OCI-LY7 (cell line): ENCODE measurements at regions of chr4 and their contacts with region 1.

Region 1: GRCh38 chr4:27000820-27001219 is 140.2 kb downstream of the STIM2 start:
- DNase-seq: peak; percentile 70
- H3K4me3 ChIP-seq: no peak overlapping the region
- H3K27ac ChIP-seq: peak overlapping the region; percentile 38
- H3K4me1 ChIP-seq: peaks cover 65% of the 10 kb centered on the region
- CTCF ChIP-seq: peak; percentile 77

Region 2: GRCh38 chr4:26719954-26720552 is 280.8 kb before region 1 on chr4:
- CTCF ChIA-PET with region 1: no interaction called
- POLR2A ChIA-PET with region 1: interaction called, 15 read pairs
- intact Hi-C with region 1: no loop called
- DNase-seq: peak; percentile 49
- H3K4me3 ChIP-seq: no peak overlapping the region
- H3K27ac ChIP-seq: no peak overlapping the region
- H3K4me1 ChIP-seq: peaks cover 36% of the 10 kb centered on the region
- CTCF ChIP-seq: peak; percentile 97

Region 3: DNA sequence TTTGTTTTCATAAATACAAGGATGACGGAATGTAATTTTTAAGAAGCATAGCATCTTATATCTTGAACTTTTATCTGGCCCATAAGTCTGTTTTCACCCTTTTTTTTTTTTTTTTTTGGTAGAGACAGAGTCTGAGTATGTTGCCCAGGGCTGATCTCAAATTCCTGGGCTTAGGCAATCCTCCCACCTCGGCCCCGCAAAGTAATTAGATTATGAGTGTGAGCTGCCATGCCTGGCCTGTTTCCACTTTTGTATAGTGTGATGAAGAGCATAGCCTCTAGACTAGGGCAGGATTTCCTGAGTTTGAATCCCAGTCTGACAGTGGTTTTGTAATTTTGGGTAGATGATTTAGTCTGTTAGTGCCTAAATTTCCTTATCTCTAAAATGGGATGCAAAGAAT is 129.2 kb before region 1 on chr4:
- CTCF ChIA-PET with region 1: no interaction called
- POLR2A ChIA-PET with region 1: interaction called, 34 read pairs
- intact Hi-C with region 1: no loop called
- DNase-seq: no peak
- H3K4me3 ChIP-seq: no peak overlapping the region
- H3K27ac ChIP-seq: no peak overlapping the region
- H3K4me1 ChIP-seq: peaks cover 59% of the 10 kb centered on the region
- CTCF ChIP-seq: no peak

Region 4: DNA sequence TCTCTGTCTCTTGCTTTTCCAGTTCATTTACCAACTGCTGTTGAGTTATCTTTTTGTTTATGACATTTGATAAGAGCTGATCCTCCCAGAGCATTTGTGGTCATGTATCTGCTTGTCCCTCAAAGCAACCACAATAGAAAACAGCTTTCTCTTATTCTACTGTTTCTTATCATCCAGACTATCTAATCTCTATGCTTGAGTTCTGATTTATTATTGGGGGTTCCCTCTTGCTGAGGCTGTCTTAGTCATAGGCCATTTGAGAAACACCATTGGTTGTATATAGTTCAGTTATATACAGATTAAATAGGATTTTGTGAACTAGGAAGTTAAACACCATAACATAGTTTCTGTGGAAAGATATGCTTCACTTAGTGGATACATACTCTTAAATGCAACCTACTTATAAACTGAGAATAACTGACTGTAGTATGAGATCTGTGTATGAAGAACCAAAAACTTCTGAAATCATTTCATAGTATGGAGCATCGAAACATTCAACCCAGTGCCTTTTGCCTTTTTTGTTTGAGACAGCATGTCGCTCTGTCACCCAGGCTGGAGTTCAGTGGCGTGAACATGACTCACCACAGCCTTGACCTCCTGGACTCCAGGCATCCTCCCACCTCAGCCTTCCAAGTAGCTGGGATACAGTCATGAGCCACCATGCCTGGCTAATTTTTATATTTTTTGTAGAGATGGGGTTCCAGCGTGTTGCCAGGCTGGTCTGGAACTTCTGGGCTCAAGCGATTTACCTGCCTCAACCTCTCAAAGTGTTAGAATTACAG is 64.3 kb before region 1 on chr4:
- CTCF ChIA-PET with region 1: no interaction called
- POLR2A ChIA-PET with region 1: interaction called, 5 read pairs
- intact Hi-C with region 1: loop called (anchors 5 kb)
- DNase-seq: no peak
- H3K4me3 ChIP-seq: no peak overlapping the region
- H3K27ac ChIP-seq: peak overlapping the region; percentile 18
- H3K4me1 ChIP-seq: peaks cover 38% of the 10 kb centered on the region
- CTCF ChIP-seq: no peak

Region 5: DNA sequence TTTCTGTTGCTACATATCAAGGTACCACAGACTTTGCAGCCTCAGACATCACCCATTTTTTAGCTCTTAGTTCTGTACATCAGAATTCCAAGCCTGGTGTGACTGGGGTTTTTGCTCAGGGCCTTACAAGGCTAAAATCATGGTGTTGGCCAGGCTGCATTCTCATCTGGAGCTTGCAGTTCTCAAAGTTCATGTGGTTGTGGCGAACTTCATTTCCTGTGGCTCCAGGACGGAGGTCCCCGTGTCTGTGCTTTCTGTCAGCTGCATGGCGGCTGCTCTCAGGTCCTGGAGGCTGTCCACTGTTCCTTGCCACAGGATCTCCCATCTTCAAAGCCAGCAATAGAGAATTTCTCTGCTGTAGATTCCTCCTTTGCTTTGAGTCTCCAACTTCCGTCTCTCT is 17.3 kb after region 1 on chr4:
- CTCF ChIA-PET with region 1: no interaction called
- POLR2A ChIA-PET with region 1: interaction called, 13 read pairs
- intact Hi-C with region 1: no loop called
- DNase-seq: no peak
- H3K4me3 ChIP-seq: no peak overlapping the region
- H3K27ac ChIP-seq: no peak overlapping the region
- H3K4me1 ChIP-seq: no peaks in the 10 kb centered on the region
- CTCF ChIP-seq: no peak

Region 6: DNA sequence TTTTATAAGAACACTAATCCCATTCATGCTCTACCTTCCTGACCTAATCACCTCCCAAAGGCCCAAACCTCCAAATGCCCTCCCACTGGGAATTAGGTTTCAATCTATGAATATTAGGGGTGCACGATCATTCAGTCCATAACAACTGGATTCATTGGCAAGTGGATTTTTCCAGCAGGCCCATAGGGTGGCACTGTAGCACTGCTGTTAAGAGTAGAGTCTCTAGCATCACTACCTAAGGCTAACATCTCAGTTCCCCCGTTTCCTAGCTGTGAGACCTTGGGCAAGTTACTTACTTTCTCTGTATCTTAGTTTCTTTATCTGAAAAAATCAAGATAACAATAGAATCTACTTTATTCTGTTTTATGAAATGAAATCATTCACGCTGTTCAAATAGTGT is 175.6 kb after region 1 on chr4:
- CTCF ChIA-PET with region 1: no interaction called
- POLR2A ChIA-PET with region 1: no interaction called
- intact Hi-C with region 1: no loop called
- DNase-seq: peak; percentile 25
- H3K4me3 ChIP-seq: no peak overlapping the region
- H3K27ac ChIP-seq: no peak overlapping the region
- H3K4me1 ChIP-seq: no peaks in the 10 kb centered on the region
- CTCF ChIP-seq: peak; percentile 64